ENCODE measurements at regions of chr13 and their contacts with region 1.

Region 1: DNA sequence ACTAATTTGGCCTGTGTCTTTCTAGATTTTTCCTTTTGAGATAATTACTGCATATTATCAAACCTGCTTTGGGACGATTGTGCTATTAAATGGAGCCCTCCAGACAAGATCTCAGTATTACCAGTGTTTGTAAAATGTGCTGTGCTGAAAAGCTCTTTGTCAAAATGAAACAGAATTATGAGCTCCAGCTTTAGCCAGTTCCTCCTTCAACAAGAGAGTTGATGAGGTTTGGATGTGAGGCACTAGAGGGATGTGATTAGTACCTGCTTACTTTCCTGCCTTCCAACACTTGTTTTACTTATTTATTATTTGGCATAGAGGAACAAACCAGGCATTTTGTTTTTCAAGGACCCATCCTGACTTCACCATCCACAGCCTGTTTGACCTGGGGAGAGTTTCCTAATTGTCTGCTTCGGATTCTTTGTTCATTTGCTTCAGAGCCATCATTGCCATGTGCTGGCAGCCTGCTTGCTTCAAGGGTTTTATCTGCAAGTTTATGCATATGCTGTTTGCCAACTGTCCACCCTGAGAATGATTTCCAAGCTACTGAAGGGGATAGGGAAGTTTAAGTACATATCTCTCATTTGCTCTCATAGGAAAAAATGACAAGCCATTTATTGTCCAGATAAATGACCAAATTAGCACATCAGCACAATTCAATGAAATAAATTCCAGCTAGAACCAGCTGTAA is 32.9 kb upstream of the CPB2 start:
- DNase-seq: no peak
- ATAC-seq: no peak
- H3K4me3 Mint-ChIP-seq: no peak overlapping the region
- H3K27ac Mint-ChIP-seq: peak overlapping the region; percentile 30
- H3K4me1 Mint-ChIP-seq: peaks cover 2% of the 10 kb centered on the region
- H3K27me3 Mint-ChIP-seq: no peaks in the 10 kb centered on the region
- CTCF ChIP-seq: no peak

Region 2: DNA sequence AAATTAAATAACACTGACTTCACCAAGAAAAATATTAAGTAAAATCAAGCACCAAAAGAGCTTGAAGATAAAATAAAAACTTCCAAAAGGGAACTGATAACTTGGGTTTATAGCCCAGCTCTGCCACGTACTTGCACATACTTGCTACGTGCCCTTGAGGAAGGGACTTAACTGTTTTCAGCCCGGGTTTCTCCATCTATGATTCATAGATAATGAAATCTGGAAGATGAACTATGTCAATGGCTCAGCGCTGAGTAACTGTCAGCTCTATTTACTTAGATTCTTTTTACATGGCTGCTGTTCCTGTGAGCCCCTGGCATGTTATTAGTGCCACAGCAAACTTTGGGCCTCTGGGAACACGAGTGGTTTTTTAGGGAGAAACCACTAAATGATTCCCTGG is 75.6 kb before region 1 on chr13:
- CTCF ChIA-PET with region 1: no interaction called
- POLR2A ChIA-PET with region 1: no interaction called
- intact Hi-C with region 1: no loop called
- DNase-seq: no peak
- ATAC-seq: no peak
- H3K4me3 Mint-ChIP-seq: no peak overlapping the region
- H3K27ac Mint-ChIP-seq: no peak overlapping the region
- H3K4me1 Mint-ChIP-seq: no peaks in the 10 kb centered on the region
- H3K27me3 Mint-ChIP-seq: no peaks in the 10 kb centered on the region
- CTCF ChIP-seq: no peak

Region 3: DNA sequence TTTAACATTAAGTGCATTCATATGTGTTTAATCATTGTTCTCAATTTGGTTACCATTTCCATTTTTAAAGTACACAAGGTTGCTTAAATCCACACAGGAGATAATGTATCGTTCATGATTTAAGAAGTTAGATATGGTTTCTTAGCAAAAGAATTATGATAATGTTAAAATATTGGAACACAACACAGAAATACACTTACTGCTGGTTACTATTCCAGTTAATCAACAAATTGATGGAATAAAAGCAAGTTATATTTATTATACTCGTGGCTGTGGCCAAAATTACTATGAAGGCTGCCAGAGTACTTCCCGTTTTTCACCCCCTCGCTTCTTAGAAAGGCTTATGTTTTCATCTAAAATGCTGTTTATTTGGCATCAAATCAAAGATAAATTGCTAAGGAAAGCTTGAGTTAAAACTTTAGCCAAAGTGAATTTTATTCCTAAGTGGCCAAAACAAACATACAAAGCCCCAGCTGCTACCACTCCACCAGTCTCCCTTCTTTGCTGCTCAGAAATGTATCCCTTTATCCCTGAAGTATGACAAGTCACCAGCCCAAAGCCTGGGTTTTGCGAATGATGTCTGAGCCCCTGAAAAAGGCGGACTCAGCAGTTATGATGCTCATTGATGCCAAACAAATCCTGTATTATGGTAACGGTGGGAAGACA is 16.5 kb after region 1 on chr13:
- CTCF ChIA-PET with region 1: interaction called, 4 read pairs
- POLR2A ChIA-PET with region 1: interaction called, 6 read pairs
- intact Hi-C with region 1: loop called (anchors 2 kb)
- DNase-seq: no peak
- ATAC-seq: no peak
- H3K4me3 Mint-ChIP-seq: no peak overlapping the region
- H3K27ac Mint-ChIP-seq: peak overlapping the region; percentile 20
- H3K4me1 Mint-ChIP-seq: peaks cover 10% of the 10 kb centered on the region
- H3K27me3 Mint-ChIP-seq: no peaks in the 10 kb centered on the region
- CTCF ChIP-seq: no peak